Left colon (tissue), 2 donors: ENCODE measurements at regions of chr6 and their contacts with region 1.

Region 1: GRCh38 chr6:128725271-128726233 is 157.4 kb upstream of the LAMA2 start:
- DNase-seq: peak in 1 of 2 donors; percentile 18
- ATAC-seq: no peak

Region 2: GRCh38 chr6:129267028-129267427 is 541.5 kb after region 1 on chr6:
- intact Hi-C with region 1: loop called in 1 of 2 experiments (anchors 10 kb)
- DNase-seq: no peak
- ATAC-seq: no peak

Region 3: DNA sequence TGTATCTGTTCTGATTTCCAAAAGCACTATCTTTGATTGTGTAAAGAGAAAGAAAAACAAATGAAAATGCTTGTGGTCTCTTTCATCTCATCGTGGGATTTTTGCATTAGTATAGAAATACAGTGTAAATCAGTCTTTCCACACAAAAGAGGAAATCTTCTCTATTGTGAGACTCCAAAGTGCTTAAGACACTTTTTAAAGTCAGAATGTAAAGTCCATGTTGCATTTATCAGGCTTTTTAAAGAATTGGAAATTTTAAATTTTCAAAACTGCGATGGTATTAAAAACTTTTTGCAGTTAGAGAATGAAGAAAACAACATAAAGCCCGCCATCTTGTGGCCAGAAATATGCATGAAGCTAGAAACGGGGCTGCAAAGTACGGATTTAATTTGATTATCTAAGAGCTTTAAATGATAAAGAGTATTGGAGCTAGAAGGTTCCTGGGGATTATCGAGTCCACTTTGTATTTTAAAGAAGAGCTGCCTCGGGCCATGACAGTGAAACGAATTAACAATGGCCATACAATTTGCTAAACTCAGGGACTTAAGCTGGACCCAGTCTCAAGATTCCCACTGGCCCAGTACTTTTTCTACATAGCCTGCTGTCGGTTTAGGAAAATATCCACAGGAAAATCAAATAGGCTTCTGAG is 644.8 kb after region 1 on chr6:
- intact Hi-C with region 1: loop called in 1 of 2 experiments (anchors 10 kb)
- DNase-seq: peak; percentile 27 to 61
- ATAC-seq: peak; percentile 40